HEK293T (cell line): ENCODE measurements at regions of chr5 and their contacts with region 1.

Region 1: GRCh38 chr5:43973318-43973717 is 370.3 kb downstream of the NNT start:
- DNase-seq: no peak

Region 2: DNA sequence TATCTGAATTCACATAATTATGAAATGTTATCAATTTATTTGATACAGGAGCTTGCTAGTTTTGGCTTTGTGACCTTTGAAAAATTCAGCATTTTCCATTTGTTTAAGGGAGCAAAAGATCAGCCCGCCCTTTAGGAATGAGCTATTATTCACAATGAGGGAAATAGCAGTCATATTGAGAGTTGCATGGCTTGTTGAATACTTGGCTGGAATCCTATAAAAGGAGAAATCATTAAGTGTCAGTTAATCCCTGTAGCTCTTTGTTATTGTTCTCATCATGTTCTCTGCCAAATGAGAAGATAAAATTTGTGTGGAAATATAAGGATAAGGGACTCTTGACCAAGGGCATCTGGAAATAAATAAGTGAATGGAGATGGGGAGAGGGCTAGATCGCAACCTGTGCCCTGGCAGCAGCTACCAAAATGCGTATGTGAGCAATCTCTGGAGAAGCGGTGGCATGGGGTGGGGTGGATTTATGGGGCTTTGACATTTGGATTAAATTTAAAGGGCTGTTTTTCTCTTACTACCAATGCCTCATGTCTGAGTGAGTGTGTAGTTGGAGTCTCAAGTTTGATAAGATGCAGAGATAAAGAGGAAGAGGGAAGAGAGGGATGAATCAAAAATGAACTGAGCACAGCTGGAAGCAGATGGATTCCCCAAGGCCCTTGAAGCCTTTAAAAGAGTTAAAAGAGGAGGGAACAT is 132.7 kb before region 1 on chr5:
- CTCF ChIA-PET with region 1: interaction called, 11 read pairs
- POLR2A ChIA-PET with region 1: no interaction called
- DNase-seq: no peak

Region 3: GRCh38 chr5:43893951-43894684 is 79.2 kb before region 1 on chr5:
- CTCF ChIA-PET with region 1: no interaction called
- POLR2A ChIA-PET with region 1: no interaction called
- DNase-seq: no peak